Testis (tissue), 5 donors: ENCODE measurements at regions of chr9 and their contacts with region 1.

Region 1: DNA sequence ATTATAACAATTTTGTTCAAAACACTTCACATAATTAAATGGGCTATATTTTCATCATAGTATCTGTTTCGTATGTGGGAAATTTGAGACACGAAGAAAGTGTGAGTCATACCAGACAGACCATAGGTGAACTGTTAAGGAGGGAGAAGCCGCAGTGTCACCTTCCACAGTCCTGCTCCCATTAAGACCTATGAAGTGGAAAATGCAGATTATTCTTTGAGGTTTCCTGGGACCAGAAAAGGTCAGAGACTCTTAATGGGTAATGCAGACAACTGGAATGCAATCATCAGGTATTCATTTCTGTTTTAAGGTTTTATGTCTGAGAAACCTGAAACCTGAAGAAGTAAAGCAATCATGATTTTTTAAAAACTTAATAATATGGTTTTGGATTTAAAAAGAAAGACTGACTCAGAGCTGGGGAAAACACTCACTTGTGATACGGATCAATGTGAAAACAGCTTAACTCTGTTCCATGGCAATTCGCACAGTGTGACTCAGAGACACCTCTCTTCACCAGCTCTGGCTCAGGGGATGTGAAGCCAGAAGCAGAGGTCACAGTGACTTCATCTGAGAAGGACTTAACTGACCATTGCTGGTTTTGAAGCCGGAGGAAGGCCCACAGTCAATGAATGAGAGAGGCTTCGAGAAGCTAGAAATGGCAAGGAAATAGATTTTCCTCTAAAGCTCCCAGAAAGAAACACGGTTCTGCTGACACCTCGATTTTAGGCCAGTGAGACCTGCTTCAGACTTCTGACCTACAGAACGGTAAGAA is 17.2 kb upstream of the GCNT1 start:
- DNase-seq: no peak
- H3K4me3 ChIP-seq: no peak overlapping the region
- H3K27ac ChIP-seq: no peak overlapping the region
- H3K4me1 ChIP-seq: peaks cover 3% of the 10 kb centered on the region
- H3K27me3 ChIP-seq: no peaks in the 10 kb centered on the region
- CTCF ChIP-seq: no peak
- POLR2A ChIP-seq: no peak

Region 2: DNA sequence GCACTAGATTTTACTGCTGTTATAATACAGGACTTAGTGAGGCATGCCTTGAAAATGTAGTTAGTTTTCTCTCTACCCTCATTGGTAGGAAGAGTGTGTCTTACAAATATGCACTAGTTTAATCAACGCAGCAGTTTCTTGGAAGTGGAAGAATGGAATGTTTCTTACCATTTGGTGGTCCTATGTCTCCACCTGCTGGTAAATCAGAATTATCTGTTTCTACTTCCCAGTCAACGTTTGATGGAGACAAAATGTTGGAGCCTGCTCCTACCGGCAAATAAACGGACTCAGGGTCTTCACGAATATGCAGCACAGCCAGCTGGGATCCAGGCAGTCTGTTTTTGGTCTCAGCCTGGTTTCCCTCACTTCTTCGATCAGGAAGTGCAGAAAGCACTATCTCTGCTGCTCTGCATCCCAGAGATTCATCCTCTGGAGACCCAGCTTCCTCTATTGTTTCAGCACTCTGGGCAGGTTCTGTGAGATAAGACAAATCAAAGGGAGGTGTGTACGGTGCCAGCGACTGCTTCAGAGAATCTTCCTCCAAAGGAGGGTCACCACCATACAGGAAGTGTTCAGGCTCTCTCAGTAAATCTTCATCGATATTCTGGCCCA is 263.0 kb after region 1 on chr9:
- intact Hi-C with region 1: loop called (anchors 10 kb)
- DNase-seq: no peak
- H3K4me3 ChIP-seq: no peak overlapping the region
- H3K27ac ChIP-seq: no peak overlapping the region
- H3K4me1 ChIP-seq: no peaks in the 10 kb centered on the region
- H3K27me3 ChIP-seq: no peaks in the 10 kb centered on the region
- CTCF ChIP-seq: peak; percentile 50 to 76 (median 73)
- POLR2A ChIP-seq: no peak